Posterior vena cava (tissue), 2 donors: ENCODE measurements at regions of chr12 and their contacts with region 1.

Region 1: GRCh38 chr12:59649203-59649602 is 53.4 kb downstream of the SLC16A7 start:
- DNase-seq: no peak

Region 2: DNA sequence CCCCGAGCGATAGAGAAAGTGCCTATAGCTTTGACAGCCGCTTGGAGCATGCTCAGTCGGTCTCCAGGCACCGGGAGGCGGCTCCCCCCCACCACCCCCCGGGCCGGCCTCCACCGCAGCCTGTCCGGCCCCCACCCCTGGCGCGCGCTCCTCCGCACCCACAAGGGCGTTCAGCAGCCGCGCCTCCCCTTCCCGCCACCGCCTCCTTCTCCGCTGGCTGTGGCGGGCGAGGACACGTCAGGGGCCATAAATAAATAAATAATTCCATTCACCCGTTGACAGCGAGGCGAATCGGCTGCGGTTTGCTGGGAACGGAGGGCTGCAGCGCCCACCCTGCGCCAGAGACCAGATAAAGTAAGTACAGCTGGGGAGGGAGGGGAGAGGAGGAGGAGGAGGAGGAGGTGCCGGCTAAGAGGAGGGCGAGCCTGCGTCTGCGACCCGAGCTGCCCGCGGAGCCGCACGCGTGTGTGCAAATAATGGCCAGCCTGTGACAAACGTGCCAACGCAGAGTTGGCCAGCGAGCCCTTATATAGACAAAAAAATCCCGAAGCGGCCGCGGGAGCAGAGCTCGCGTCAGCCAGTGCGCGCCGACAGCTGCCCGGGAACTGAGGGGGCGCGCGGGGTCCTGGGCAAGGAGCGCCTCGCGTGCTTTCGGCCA is 53.2 kb before region 1 on chr12 and contains the start of gene SLC16A7:
- intact Hi-C with region 1: loop called in 1 of 2 experiments (anchors 2 kb)
- DNase-seq: peak; percentile 97
- total RNA-seq, gene SLC16A7: 29.3 to 43.2 TPM

Region 3: GRCh38 chr12:60021235-60021634 is 372.0 kb after region 1 on chr12:
- intact Hi-C with region 1: no loop called
- DNase-seq: no peak